Thyroid gland (tissue), 4 donors: ENCODE measurements at regions of chrX and their contacts with region 1.

Region 1: DNA sequence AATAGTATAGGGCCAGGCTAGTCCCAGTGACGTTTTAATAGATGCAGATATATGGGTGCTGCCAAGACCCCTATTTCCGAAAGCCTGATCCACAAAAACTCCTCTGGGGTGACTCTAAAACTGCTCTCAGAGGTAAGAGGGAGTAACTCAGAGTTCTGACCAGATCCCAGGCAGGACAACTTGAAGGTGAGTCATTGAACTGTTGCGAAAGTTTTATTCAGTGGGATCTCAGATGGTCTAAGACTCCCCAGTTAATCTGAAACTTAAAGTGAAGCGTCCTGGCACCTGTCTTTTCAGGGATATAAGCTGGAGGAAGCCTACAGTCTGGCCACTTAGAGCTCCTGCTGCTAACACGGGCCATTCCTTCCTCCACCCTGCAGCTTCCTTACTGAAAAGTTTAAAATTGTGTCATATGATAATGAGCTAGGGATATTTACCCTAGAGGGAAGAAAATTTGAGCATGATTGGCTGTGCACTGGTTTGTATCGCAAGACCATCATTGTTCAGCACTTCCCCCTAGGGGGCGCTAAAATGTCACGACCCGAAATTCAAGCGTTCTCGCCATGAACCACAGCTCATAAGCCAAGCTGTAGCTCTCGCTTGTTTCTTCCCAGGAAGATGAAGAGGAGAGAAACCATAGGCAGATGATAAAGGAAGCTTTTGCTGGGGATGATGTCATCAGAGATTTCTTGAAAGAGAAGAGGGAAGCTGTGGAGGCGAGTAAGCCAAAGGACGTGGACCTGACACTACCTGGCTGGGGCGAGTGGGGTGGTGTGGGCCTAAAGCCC is 19.5 kb downstream of the UTP14A start:
- DNase-seq: peak; percentile 65 to 71
- H3K4me3 ChIP-seq: no peak overlapping the region
- H3K27ac ChIP-seq: no peak overlapping the region
- H3K4me1 ChIP-seq: no peaks in the 10 kb centered on the region
- H3K27me3 ChIP-seq: no peaks in the 10 kb centered on the region
- CTCF ChIP-seq: peak in 5 of 6 experiments; percentile 39 to 63 (median 58)
- POLR2A ChIP-seq: no peak

Region 2: DNA sequence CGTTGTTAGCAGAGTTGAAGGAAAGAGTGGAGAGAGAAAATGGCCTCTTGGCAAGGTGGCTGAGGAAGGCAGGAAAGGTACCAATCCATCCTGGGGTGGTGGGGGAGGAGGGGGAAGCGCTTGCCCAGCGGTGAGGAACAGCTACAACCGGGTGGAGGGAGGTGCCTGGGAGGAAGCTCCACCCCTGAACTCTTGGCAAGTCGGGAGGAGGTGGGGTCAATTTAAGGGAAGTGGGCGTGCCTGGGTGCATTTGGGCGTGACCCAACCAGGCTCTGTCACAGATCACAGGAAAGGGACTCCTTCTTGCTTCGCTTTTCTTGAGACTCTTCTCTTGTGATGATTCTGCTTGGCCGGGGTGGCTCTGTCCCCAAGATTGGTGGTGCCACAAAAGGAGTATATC is 98.6 kb after region 1 on chrX:
- intact Hi-C with region 1: loop called (anchors 10 kb)
- DNase-seq: peak; percentile 87 to 91
- H3K4me3 ChIP-seq: no peak overlapping the region
- H3K27ac ChIP-seq: no peak overlapping the region
- H3K4me1 ChIP-seq: peaks cover 0 to 5% of the 10 kb centered on the region in 2 donors
- H3K27me3 ChIP-seq: no peaks in the 10 kb centered on the region
- CTCF ChIP-seq: no peak
- POLR2A ChIP-seq: no peak

Region 3: DNA sequence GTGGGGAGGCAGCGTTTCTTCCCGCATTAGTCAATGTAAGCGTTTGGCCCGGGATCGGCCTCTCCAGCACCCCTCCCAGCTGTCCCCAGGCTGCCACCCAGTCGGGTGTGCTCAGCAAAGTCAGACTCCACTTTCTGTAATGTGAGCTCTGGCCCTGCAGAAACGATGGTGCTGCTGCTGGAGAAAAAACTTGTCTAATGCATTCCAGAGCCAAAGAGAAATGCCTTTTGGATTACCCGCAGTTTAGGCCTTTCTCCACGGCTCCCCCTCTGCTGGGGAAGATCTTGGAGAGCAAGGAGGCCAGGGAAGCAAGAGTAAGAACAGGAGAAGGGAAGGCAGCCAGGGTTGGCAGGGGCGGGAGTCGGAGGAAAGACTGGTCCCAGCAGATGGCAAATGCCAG is 129.6 kb after region 1 on chrX:
- intact Hi-C with region 1: loop called (anchors 5 kb)
- DNase-seq: no peak
- H3K4me3 ChIP-seq: no peak overlapping the region
- H3K27ac ChIP-seq: no peak overlapping the region
- H3K4me1 ChIP-seq: no peaks in the 10 kb centered on the region
- H3K27me3 ChIP-seq: no peaks in the 10 kb centered on the region
- CTCF ChIP-seq: no peak
- POLR2A ChIP-seq: no peak

Region 4: DNA sequence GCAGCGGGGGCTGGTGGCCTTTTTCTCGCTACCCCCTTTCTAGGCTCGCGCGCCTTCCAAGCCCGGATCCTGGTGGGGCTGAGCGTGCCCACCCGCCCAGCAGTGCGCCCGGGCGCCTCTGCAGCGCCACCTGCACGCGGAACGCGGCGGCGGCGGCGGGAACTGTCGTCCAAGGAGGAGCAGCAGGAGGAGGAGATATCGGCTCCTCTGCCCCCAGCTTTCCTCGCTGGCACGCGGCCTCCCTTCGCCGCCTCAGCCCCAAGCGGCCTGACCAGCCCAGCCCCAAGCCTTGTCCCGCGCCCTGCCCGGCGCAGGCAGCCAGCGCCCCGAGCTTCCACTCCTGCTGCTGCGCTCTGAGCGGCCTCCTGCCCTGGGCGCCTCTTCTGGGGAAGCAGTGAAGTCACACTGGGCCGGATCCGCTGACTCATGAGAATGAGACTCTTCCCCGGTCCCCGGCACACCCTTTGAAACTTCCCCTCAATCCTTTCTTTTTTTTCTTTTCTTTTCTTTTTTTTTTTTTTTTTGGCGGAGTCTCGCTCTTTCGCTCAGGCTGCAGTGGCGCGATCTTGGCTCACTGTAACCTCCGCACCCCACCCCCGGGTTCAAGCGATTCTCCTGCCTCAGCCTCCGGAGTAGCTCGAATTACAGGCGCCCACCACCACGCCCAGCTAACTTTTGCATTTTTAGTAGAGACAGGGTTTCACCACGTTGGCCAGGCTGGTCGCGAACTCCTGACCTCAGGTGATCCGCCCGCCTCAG is 195.4 kb after region 1 on chrX:
- intact Hi-C with region 1: no loop called
- DNase-seq: peak; percentile 72 to 75
- H3K4me3 ChIP-seq: peak overlapping the region in 1 of 3 donors; percentile 10
- H3K27ac ChIP-seq: peak overlapping the region in 2 of 3 donors; percentile 48 to 52
- H3K4me1 ChIP-seq: peaks cover 0 to 5% of the 10 kb centered on the region in 2 donors
- H3K27me3 ChIP-seq: no peaks in the 10 kb centered on the region
- CTCF ChIP-seq: peak; percentile 17 to 78 (median 60)
- POLR2A ChIP-seq: no peak